ENCODE measurements at regions of chr18 and their contacts with region 1.

Region 1: DNA sequence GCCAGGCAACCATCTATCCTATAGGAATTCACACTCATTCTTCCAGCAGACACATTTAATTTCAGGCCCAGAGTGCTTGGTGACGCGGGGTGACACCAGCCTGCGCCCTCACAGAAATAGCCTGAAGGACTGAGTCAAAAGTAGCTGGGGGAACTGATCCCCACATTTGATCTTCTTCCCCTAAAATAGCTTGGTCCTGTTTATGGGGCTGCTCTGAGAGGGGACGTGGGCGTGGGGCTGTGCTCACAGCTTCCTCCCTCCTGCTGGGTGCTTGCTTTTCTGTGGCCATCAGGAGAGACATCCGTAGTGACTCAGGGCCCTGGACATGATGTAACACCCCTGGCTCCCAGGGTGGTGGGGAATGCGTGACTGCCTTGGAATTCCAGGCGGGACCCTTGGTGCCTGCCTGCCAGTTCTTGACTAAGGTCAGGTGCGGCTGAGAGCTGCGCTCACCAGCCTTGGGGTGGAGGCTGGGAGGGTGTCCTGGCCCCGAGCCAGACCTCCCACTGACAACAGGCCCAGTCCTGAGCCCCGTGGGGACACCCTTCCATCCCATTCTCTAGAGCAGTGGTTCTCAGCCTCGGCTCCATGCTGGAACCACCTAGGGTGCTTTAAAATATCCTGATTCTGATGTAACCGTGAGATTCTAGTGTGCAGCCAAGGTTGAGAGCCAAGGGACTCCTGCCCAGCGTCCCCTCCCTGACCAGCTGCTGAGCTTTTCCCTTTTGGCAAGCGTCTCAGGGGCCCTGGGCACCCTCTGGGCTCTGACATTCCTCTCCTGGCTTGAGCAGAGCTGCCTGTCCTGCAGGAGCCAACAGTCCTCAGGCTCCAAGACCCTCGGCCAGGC is 47.4 kb upstream of the SMAD7 start:
- DNase-seq: peak; percentile 72
- H3K4me3 ChIP-seq: no peak overlapping the region
- H3K27ac ChIP-seq: peak overlapping the region; percentile 20 to 97; a peak in 3 of 4 replicates
- H3K4me1 ChIP-seq: peaks cover 23 to 29% of the 10 kb centered on the region in 2 experiments; a peak in 3 of 4 replicates
- H3K27me3 ChIP-seq: no peaks in the 10 kb centered on the region
- CTCF ChIP-seq: no peak
- EP300 ChIP-seq: peak in 1 of 2 experiments; percentile 85; a peak in 2 of 4 replicates
- RAD21 ChIP-seq: no peak

Region 2: GRCh38 chr18:48842259-48843061 is 155.7 kb before region 1 on chr18:
- CTCF ChIA-PET with region 1: no interaction called
- POLR2A ChIA-PET with region 1: no interaction called
- DNase-seq: no peak
- H3K4me3 ChIP-seq: no peak overlapping the region
- H3K27ac ChIP-seq: peak overlapping the region in 1 of 2 experiments; percentile 76; a peak in 2 of 4 replicates
- H3K4me1 ChIP-seq: peaks cover 26 to 54% of the 10 kb centered on the region in 2 experiments; a peak in 3 of 4 replicates
- H3K27me3 ChIP-seq: no peaks in the 10 kb centered on the region
- CTCF ChIP-seq: no peak
- EP300 ChIP-seq: no peak
- RAD21 ChIP-seq: no peak

Region 3: GRCh38 chr18:48983771-48984355 is 14.3 kb before region 1 on chr18:
- CTCF ChIA-PET with region 1: interaction called, 17 read pairs
- POLR2A ChIA-PET with region 1: no interaction called
- DNase-seq: no peak
- H3K4me3 ChIP-seq: no peak overlapping the region
- H3K27ac ChIP-seq: no peak overlapping the region
- H3K4me1 ChIP-seq: peaks cover 0 to 14% of the 10 kb centered on the region in 2 experiments; a peak in 2 of 4 replicates
- H3K27me3 ChIP-seq: no peaks in the 10 kb centered on the region
- CTCF ChIP-seq: no peak
- EP300 ChIP-seq: no peak
- RAD21 ChIP-seq: no peak

Region 4: DNA sequence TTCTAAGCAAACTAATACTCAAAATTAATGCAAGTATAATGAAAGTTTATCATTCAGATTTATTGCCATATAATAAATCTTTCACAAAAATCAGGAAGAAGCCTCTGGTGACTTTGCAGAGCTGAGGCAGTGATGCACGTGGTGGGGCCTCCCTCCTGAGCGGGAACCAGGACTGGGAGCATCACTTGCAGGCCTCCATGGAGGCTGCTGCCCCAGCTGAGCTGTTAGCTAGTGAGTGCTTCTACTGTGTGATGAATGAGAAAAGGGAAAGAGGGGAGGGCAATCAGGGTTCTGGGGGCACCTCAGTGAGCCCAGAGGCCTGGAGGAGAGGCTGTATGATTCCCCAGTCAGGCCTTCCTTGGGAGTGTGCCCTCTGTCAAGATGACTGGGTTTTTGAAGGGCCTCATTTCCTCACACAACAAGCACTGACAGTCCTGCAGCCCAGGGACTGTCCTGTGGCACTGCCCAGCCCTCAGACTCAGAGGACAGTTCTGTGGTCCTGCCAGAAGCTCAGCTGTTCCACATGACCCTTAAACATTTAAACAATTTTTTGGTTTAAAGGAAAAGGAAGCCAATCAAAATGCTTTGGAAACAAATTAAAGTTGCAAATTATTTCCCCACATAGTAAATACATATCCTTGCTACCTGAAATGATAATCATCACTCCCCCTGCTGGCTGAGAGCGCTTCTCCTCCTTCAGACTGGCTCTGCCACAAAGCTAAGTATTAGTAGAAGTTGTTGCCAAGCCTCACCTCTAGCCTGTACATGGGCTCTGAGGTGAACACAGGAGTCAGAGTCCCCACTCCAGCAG is 43.4 kb after region 1 on chr18:
- CTCF ChIA-PET with region 1: interaction called, 10 read pairs
- POLR2A ChIA-PET with region 1: no interaction called
- DNase-seq: no peak
- H3K4me3 ChIP-seq: no peak overlapping the region
- H3K27ac ChIP-seq: no peak overlapping the region
- H3K4me1 ChIP-seq: peaks cover 0 to 2% of the 10 kb centered on the region in 2 experiments; a peak in 1 of 4 replicates
- H3K27me3 ChIP-seq: no peaks in the 10 kb centered on the region
- CTCF ChIP-seq: peak; percentile 65
- EP300 ChIP-seq: no peak
- RAD21 ChIP-seq: peak; percentile 64

Measured in SK-N-SH (cell line).